ENCODE measurements at regions of chr6 and their contacts with region 1.

Region 1: GRCh38 chr6:34055223-34055933 is 90.5 kb downstream of the GRM4 start:
- DNase-seq: peak in 2 of 3 donors; percentile 70 to 75
- ATAC-seq: peak; percentile 54
- H3K4me3 ChIP-seq: no peak overlapping the region
- H3K4me1 ChIP-seq: no peaks in the 10 kb centered on the region
- CTCF ChIP-seq: peak; percentile 64

Region 2: GRCh38 chr6:34154668-34155447 is 99.5 kb after region 1 on chr6:
- intact Hi-C with region 1: loop called in 1 of 2 experiments (anchors 10 kb)
- DNase-seq: peak in 2 of 3 donors; percentile 57 to 69
- ATAC-seq: peak; percentile 83
- H3K4me3 ChIP-seq: no peak overlapping the region
- H3K4me1 ChIP-seq: peaks cover 8% of the 10 kb centered on the region
- CTCF ChIP-seq: peak; percentile 93

Measured in mucosa of descending colon (tissue), 3 donors.